ENCODE measurements at regions of chr5 and their contacts with region 1.

Region 1: DNA sequence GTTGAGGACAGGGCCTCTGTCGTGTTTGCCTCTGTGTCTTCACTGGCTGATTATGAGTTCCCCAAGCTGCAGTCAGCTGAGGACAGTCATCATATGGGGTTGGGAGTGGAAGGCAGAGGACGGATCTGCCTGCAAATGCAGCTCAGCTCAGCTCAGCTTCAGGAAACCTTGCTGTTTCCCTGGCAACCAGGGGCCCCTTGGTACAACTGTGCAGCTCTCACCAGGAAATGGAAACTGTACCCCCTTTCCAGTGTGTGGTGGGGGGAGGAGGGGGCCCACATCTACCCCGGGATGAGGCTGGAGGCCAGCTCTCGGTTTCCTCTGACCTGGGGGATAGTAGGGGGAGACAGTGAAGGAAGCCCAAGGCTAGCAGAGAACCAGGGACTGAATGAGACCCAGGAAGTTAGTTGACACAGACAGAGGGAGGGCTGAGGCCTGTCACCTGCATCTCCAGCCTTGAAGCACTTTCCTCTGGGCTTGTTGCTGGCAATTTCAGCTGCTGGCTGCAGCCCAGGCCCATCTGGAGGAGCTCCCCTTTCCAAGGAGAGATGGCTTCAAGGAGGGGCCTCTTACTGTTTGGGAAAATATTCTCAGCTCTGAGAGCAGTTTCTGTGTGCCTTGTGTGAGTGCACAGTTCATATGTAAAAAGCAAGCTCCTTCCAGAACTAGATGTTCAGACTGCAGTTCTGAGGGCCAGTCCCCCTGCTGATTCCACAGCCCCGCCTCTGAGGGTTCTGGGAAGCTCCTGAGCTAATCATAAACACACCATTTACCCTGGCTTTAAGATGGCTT is 6.9 kb downstream of the ANXA6 start:
- DNase-seq: peak; percentile 47 to 88 (median 80)
- H3K4me3 ChIP-seq: peak overlapping the region in 5 of 7 experiments; percentile 7 to 60 (median 37)
- H3K27ac ChIP-seq: peak overlapping the region; percentile 66 to 85
- H3K4me1 ChIP-seq: peaks cover 30 to 89% (median 77%) of the 10 kb centered on the region in 4 experiments
- H3K27me3 ChIP-seq: no peaks in the 10 kb centered on the region

Region 2: DNA sequence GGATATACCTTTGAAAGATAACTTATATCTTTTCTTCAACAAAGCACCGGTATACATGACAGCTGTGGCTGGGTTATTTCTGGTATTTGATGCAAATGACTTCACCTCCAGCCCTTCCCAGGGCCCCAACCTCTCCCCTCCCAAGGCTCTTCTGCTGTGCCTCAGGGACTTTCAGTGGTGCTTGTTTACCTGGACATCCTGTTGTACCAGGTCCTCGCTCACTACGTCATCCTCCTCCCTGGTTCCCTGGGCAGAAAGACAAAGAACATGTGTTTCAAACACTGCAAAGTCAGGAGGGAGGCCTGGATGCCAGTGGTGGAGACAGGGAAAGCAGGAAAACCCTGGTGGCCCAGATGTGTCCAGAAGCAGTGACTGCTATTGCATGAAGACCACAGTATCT is 16.4 kb before region 1 on chr5:
- CTCF ChIA-PET with region 1: interaction called, 58 read pairs
- POLR2A ChIA-PET with region 1: interaction called, 6 read pairs
- DNase-seq: no peak
- H3K4me3 ChIP-seq: no peak overlapping the region
- H3K27ac ChIP-seq: no peak overlapping the region
- H3K4me1 ChIP-seq: peaks cover 0 to 2% (median 0%) of the 10 kb centered on the region in 4 experiments
- H3K27me3 ChIP-seq: no peaks in the 10 kb centered on the region